WTC11 (cell line): ENCODE measurements at regions of chr5 and their contacts with region 1.

Region 1: GRCh38 chr5:73448463-73449136 is at the start of gene FOXD1:
- DNase-seq: peak; percentile 85
- ATAC-seq: peak; percentile 72
- H3K4me3 Mint-ChIP-seq: peak within 1 kb of the TSS; percentile 74
- H3K27ac Mint-ChIP-seq: no peak within 1 kb of the TSS
- H3K4me1 Mint-ChIP-seq: peaks cover 43% of the 10 kb centered on the region
- H3K27me3 Mint-ChIP-seq: peaks cover 93% of the 10 kb centered on the region
- CTCF ChIP-seq: no peak
- total RNA-seq, gene FOXD1: 7.0 to 10.3 TPM (median 7.9 TPM) in 3 replicates

Region 2: DNA sequence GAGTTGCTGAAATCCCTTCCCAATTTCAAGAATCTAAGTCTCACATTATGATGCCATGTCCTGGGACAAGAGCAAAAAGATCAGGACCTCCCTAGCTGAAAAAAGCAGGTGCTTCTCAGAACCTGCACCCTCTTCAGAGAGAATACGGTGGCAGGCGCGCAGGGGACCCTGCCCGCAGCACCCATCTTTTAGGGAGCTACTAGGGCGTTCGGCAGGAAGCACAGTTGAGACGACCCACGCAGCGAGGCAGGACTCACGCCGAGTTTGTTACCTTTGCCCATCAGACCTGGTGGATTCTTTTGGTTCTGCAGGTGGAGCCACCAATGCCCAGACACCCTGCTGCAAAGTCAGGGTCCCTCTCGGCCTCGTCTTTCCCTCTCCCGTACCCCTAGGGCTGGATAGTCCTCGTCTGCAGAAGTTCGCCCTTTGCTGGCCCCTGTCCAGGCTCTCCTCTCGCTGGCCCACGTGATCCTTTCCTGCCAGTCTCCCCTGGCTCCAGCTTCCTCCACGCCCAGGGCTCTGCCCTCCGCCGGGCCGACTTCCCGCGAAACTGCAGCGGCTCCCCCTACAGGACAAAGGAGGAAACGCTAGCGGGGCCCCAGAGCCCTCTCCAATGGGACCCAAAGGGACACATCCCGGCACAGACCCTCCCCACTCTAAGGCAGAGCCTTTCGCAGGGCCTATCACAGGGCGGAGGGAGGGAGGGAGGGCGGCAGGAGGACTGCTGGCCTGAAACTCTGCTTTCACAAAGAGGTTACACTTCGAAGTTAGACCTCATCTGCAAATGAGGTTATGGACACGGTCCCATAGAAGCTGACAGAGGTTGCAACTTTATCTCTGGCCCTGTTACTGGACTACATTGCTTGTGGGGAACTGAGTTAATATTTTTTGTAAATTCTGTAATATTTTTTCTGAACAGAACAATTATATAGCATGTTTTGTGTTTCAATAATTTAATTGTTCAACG is 246.8 kb before region 1 on chr5:
- CTCF ChIA-PET with region 1: interaction called, 13 read pairs
- POLR2A ChIA-PET with region 1: no interaction called
- DNase-seq: peak; percentile 96
- ATAC-seq: peak; percentile 99
- H3K4me3 Mint-ChIP-seq: no peak overlapping the region
- H3K27ac Mint-ChIP-seq: no peak overlapping the region
- H3K4me1 Mint-ChIP-seq: peaks cover 9% of the 10 kb centered on the region
- H3K27me3 Mint-ChIP-seq: peaks cover 33% of the 10 kb centered on the region
- CTCF ChIP-seq: peak; percentile 89

Region 3: DNA sequence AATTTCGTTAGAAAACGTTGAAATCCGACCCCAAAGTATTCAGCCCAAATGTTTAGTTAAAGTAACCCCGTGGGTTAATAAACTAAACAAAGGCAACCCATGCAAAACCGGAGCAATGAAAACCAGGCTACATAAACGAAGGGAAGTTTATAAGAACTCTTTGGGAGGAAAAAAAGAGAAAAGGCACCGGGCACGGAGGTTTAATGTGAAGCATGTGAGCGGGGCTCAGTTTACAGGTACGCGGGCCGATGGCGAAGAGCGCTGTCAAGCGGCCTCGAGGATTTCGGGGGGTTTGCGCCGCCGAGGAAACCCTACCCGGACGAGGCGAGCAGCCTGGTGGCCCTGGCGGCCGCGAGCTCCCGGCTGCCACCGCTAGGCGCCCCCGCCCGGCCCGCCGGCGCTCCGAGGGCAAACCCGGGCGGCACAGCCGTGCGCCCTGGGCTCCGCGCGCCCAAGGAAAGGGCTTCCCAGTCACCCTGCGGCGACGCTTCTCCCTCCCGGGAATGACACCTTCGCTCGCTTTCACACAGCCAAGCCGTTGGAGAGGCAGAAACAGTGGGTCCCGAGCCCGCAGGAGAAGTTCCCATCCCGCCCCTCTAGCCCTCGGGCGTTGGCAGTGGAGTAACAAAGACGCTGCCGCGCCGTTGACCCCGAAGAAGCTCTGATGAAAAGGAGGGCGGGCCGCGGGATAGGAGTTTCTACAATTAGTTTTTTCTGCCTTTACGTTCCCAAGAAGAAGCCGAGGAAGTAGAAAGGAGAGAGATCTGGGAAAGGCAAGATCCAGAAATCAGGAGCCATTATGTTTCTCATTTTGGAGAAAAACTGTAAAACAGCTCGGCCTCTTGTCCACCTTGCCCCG is 149.6 kb before region 1 on chr5:
- CTCF ChIA-PET with region 1: interaction called, 29 read pairs
- POLR2A ChIA-PET with region 1: no interaction called
- DNase-seq: peak; percentile 62
- ATAC-seq: peak; percentile 38
- H3K4me3 Mint-ChIP-seq: peak overlapping the region; percentile 69
- H3K27ac Mint-ChIP-seq: no peak overlapping the region
- H3K4me1 Mint-ChIP-seq: peaks cover 54% of the 10 kb centered on the region
- H3K27me3 Mint-ChIP-seq: peaks cover 100% of the 10 kb centered on the region
- CTCF ChIP-seq: no peak

Region 4: DNA sequence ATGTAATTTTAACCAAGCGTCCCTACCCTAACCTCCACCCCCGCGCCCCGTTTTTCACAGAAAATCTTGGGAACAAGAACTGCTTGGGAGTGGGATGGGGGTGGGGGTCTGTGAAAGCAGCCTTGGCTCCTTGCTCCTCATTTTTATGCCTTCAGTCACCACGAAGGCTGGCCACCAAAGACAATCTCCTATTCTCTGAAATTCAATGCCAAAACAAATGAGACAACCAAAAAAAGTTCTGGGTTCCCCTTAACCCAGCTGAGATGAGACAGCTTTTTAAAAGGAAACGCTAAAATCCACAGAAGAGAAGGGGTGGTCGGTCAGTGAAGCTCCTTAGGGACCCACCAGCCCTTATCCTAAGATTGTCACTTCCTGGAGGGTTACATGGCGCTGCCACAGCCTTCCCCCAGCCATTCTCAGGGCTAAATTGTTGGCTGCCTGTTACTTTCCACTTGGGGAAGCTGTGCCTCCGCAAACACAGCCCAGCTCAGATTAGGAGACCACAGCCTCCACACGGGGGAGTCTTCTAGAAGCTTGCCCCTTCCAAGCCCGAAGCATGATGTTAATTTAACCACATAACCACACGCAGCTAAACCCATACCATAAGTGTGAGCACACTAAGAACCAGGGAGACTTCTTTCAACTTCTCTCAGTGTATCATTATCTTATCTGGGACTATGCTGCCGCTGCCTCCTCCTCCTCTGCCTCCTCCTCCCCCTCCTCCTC is 136.3 kb before region 1 on chr5:
- CTCF ChIA-PET with region 1: interaction called, 18 read pairs
- POLR2A ChIA-PET with region 1: no interaction called
- DNase-seq: peak; percentile 37
- ATAC-seq: peak; percentile 51
- H3K4me3 Mint-ChIP-seq: peak overlapping the region; percentile 66
- H3K27ac Mint-ChIP-seq: no peak overlapping the region
- H3K4me1 Mint-ChIP-seq: peaks cover 37% of the 10 kb centered on the region
- H3K27me3 Mint-ChIP-seq: peaks cover 77% of the 10 kb centered on the region
- CTCF ChIP-seq: no peak

Region 5: DNA sequence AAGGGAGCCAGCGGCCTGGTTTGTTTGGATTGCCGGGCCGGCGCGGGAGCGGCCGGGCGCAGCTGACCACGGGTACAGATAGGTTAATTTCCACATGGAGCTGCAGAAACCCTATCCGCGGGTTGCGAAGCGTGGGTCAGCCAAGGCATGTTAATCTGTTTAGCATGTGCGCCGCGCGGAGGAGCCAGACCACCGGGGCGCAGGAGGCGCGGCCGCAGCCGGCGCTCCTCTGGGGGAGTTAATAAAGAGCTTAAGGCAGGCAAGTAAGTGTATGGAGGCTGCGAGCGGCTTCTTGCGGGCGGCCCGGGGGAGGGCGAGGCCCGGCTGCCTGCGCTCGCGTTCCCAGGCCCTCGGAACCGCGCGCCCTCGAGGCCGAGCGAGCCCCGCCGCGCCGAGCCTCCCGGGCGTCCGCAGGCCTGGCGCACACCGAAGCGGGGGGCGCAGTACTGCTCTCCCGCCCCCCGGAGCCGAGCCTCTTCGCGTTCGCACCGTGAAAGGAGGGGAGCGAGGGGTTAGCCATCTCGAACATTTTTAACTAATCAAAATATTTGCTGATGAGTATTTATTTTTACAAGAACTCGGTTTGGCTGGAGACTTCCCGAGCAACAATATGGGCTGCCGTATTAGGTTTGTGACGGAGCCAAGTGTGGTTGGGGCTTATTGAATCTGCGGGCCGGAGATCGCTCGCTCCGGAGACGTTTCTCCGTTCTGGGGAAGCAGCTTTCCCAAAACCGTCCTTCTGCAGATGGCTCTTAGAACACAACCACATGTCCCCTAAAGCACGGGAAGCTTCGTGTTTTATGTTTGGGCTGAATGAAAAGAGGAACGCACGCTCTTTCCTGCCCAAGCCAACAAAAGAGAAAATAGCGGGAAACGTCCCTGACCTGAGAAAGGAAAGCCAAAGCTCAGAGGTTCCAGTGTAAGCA is 28.9 kb before region 1 on chr5:
- CTCF ChIA-PET with region 1: interaction called, 28 read pairs
- POLR2A ChIA-PET with region 1: interaction called, 4 read pairs
- DNase-seq: peak; percentile 52
- ATAC-seq: peak; percentile 68
- H3K4me3 Mint-ChIP-seq: peak overlapping the region; percentile 69
- H3K27ac Mint-ChIP-seq: no peak overlapping the region
- H3K4me1 Mint-ChIP-seq: peaks cover 19% of the 10 kb centered on the region
- H3K27me3 Mint-ChIP-seq: peaks cover 91% of the 10 kb centered on the region
- CTCF ChIP-seq: no peak

Region 6: DNA sequence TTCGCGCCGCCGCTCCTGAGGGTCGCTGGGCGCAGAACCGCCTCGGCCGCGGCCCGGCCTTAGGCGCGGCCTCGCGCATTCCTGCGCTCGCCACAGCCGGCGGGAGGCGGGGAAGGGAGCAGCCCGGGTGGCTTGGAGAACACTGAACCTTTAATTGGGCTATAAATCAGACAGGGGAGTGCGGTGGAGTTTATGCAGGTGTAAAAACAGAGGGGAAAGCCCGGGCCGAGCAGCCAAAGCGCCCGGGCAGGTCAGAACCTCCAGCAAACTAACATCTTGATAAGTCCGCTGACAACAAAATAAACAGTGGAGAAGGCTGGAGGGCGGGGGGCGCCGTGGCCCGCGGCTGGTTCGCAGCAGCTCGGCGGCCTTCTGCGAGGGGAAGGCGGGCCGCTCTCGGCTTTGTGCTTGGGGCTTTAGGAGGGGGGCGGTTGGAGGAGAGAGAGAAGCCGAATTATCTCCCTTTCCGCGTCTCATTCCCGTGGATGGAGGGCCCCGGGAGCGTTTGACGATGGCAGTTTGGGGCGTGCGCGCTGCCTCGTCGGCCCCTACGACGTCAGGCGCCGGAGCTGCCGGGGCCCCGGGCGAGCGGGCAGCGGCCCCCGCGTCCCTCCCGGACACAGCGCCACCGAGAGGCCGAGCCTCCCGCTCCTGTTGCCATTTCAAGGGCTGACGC is 11.4 kb before region 1 on chr5:
- CTCF ChIA-PET with region 1: interaction called, 16 read pairs
- POLR2A ChIA-PET with region 1: no interaction called
- DNase-seq: peak; percentile 82
- ATAC-seq: peak; percentile 70
- H3K4me3 Mint-ChIP-seq: peak overlapping the region; percentile 70
- H3K27ac Mint-ChIP-seq: no peak overlapping the region
- H3K4me1 Mint-ChIP-seq: peaks cover 39% of the 10 kb centered on the region
- H3K27me3 Mint-ChIP-seq: peaks cover 98% of the 10 kb centered on the region
- CTCF ChIP-seq: no peak

Region 7: DNA sequence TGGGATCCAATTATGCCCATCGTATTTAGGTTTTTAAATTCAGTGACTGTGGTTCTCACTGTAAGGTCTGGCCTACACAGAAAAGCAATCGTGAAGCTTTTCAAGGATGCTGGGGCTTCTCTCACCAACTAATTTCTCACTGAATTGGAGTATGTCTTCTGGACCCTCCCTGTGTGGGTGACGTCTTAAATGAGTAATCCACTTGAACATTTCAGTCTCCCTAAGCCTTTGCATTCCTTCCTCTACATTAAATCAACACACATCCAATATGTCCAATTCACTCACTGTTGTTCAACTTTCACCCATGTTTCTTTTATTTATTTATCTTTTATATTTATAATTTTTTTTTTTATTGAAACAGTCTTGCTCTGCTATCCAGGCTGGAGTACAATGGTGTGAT is 37.1 kb after region 1 on chr5:
- CTCF ChIA-PET with region 1: interaction called, 27 read pairs
- POLR2A ChIA-PET with region 1: interaction called, 3 read pairs
- DNase-seq: no peak
- ATAC-seq: no peak
- H3K4me3 Mint-ChIP-seq: no peak overlapping the region
- H3K27ac Mint-ChIP-seq: peak overlapping the region; percentile 80; the same call in 1 of the 2 replicates
- H3K4me1 Mint-ChIP-seq: peaks cover 60% of the 10 kb centered on the region
- H3K27me3 Mint-ChIP-seq: no peaks in the 10 kb centered on the region
- CTCF ChIP-seq: no peak

Region 8: GRCh38 chr5:73709536-73710129 is 261.0 kb after region 1 on chr5:
- CTCF ChIA-PET with region 1: no interaction called
- POLR2A ChIA-PET with region 1: no interaction called
- DNase-seq: no peak
- ATAC-seq: no peak
- H3K4me3 Mint-ChIP-seq: no peak overlapping the region
- H3K27ac Mint-ChIP-seq: no peak overlapping the region
- H3K4me1 Mint-ChIP-seq: no peaks in the 10 kb centered on the region
- H3K27me3 Mint-ChIP-seq: no peaks in the 10 kb centered on the region
- CTCF ChIP-seq: no peak